Kidney (tissue), 22 donors: ENCODE measurements at regions of chr2 and their contacts with region 1.

Region 1: GRCh38 chr2:44981136-44982108 is 27.8 kb downstream of the SIX2 start:
- DNase-seq: peak; percentile 85 to 92 (median 88)
- H3K4me3 ChIP-seq: no peak overlapping the region
- H3K27ac ChIP-seq: no peak overlapping the region
- H3K4me1 ChIP-seq: no peaks in the 10 kb centered on the region
- H3K27me3 ChIP-seq: peaks cover 2% of the 10 kb centered on the region
- CTCF ChIP-seq: peak; percentile 92

Region 2: GRCh38 chr2:44267796-44268648 is 713.4 kb before region 1 on chr2:
- intact Hi-C with region 1: no loop called
- DNase-seq: peak in 2 of 5 donors; percentile 71 to 76
- H3K4me3 ChIP-seq: peak overlapping the region in 1 of 3 donors; percentile 17
- H3K27ac ChIP-seq: peak overlapping the region; percentile 72 to 83
- H3K4me1 ChIP-seq: peaks cover 2 to 16% (median 10%) of the 10 kb centered on the region in 3 donors
- H3K27me3 ChIP-seq: no peaks in the 10 kb centered on the region
- CTCF ChIP-seq: no peak

Region 3: GRCh38 chr2:45497355-45497754 is 515.9 kb after region 1 on chr2:
- intact Hi-C with region 1: loop called (anchors 5 kb)
- DNase-seq: no peak
- H3K4me3 ChIP-seq: no peak overlapping the region
- H3K27ac ChIP-seq: no peak overlapping the region
- H3K4me1 ChIP-seq: no peaks in the 10 kb centered on the region
- H3K27me3 ChIP-seq: no peaks in the 10 kb centered on the region
- CTCF ChIP-seq: no peak